ENCODE measurements at regions of chr12 and their contacts with region 1.

Region 1: GRCh38 chr12:21607701-21608100 is 3.1 kb upstream of the GYS2 start:
- DNase-seq: no peak
- ATAC-seq: peak in 2 of 4 donors; percentile 51 to 52
- H3K4me3 ChIP-seq: no peak overlapping the region
- H3K27ac ChIP-seq: no peak overlapping the region
- H3K4me1 ChIP-seq: peaks cover 0 to 6% (median 0%) of the 10 kb centered on the region in 12 donors
- H3K27me3 ChIP-seq: no peaks in the 10 kb centered on the region
- CTCF ChIP-seq: peak; percentile 21 to 65 (median 55)
- POLR2A ChIP-seq: no peak

Region 2: DNA sequence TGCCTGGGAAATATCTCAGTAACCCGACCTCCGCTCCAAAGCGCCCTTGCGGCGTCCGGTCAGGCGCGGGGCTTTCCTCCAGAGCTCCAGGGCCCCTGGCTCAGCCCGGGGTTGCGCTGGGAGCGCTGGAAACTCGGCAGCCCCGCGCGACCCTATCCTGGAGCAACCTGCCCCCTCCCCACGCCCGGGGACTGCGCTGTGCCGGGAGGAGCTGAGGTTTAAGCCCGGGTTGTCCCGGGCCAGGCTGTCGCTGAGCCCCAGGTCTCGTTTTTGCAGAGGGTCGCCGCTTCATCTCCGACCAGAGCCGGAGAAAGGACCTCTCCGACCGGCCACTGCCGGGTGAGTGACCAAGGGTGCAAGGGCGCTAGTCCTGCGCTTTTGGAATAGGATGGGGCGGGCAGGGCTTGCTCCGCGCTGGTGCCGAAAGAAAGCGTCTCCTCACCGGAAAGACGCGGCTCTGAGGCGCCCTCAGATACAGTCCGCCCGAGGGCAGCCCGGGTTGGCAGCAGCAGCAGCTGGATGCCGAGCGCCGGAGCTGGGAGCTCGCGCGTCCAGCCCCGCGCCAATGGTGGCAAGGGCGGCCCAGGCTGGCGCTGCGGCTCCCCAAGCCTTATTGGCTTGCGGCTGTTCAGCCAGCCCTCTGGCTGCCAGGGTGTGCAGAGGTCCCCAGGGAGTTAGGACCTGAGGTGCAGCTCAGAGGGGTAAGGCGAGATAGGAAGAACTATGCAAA is 80.1 kb before region 1 on chr12:
- intact Hi-C with region 1: loop called in 1 of 10 experiments (anchors 5 kb)
- DNase-seq: peak; percentile 51 to 82 (median 78)
- ATAC-seq: peak; percentile 88 to 95 (median 94)
- H3K4me3 ChIP-seq: peak overlapping the region; percentile 30 to 84 (median 70)
- H3K27ac ChIP-seq: peak overlapping the region; percentile 35 to 89 (median 80)
- H3K4me1 ChIP-seq: peaks cover 0 to 23% (median 5%) of the 10 kb centered on the region in 12 donors
- H3K27me3 ChIP-seq: peaks cover 0 to 42% (median 0%) of the 10 kb centered on the region in 9 donors
- CTCF ChIP-seq: peak in 3 of 12 donors; percentile 21 to 33 (median 24)
- POLR2A ChIP-seq: no peak

Region 3: GRCh38 chr12:21666722-21667121 is 59.0 kb after region 1 on chr12:
- intact Hi-C with region 1: no loop called
- DNase-seq: no peak
- ATAC-seq: no peak
- H3K4me3 ChIP-seq: no peak overlapping the region
- H3K27ac ChIP-seq: no peak overlapping the region
- H3K4me1 ChIP-seq: no peaks in the 10 kb centered on the region
- H3K27me3 ChIP-seq: no peaks in the 10 kb centered on the region
- CTCF ChIP-seq: no peak
- POLR2A ChIP-seq: no peak

Region 4: GRCh38 chr12:21677622-21678277 is 70.0 kb after region 1 on chr12:
- intact Hi-C with region 1: loop called (anchors 1 to 5 kb)
- DNase-seq: no peak
- ATAC-seq: no peak
- H3K4me3 ChIP-seq: no peak overlapping the region
- H3K27ac ChIP-seq: no peak overlapping the region
- H3K4me1 ChIP-seq: peaks cover 0 to 11% (median 0%) of the 10 kb centered on the region in 12 donors
- H3K27me3 ChIP-seq: no peaks in the 10 kb centered on the region
- CTCF ChIP-seq: no peak
- POLR2A ChIP-seq: no peak

Region 5: DNA sequence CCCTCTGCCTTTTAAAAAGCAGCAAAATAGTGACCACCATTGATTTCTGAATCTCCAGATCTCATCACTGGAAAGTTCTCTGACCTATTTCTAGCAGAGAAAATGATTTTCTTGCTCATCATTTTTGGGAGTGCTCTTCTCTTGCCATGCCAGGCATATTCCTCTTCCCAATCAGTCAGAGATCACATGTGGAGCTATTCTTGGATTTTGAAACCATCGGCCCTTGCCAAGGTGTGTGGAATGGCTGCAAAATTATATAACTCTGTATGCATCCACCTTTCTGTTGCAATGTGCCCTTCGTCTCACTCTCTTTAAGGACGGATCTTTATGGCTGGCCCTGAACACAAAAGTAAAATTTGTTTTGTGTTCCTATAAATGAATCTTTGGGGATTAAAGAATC is 75.4 kb after region 1 on chr12:
- intact Hi-C with region 1: loop called (anchors 1 to 5 kb)
- DNase-seq: no peak
- ATAC-seq: peak in 3 of 4 donors; percentile 50 to 81 (median 65)
- H3K4me3 ChIP-seq: no peak overlapping the region
- H3K27ac ChIP-seq: peak overlapping the region in 6 of 12 donors; percentile 17 to 53 (median 38)
- H3K4me1 ChIP-seq: peaks cover 0 to 16% (median 0%) of the 10 kb centered on the region in 12 donors
- H3K27me3 ChIP-seq: peaks cover 0 to 2% (median 0%) of the 10 kb centered on the region in 9 donors
- CTCF ChIP-seq: no peak
- POLR2A ChIP-seq: no peak

Region 6: DNA sequence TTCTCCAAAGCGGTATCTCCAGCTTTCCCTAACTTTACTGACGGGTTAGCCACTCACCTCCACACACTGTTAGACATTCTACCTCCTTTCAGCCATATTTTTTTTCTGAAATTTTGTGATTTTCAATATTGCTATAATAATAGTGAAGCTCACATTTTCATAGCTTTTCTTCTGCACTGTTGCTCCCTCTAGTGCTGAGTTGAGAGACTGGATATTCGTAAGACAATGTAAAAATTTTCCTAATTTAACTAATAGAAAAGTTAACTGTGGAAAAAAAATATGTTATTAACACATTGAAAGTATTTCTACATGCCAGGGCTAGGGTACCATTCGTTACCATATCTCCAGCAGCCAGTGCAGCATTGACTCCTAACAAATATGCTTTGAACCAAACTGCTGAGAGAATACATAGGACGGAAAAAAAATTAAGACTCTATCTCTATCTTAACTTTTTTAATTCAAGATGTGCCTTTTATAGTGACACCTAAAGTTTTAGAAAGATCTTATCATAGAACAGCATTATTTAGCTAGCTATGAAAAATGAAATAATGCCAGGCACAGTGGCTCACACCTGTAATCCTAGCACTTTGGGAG is 382.2 kb after region 1 on chr12:
- intact Hi-C with region 1: loop called in 1 of 10 experiments (anchors 10 kb)
- DNase-seq: no peak
- ATAC-seq: peak in 1 of 4 donors; percentile 36
- H3K4me3 ChIP-seq: no peak overlapping the region
- H3K27ac ChIP-seq: no peak overlapping the region
- H3K4me1 ChIP-seq: peaks cover 0 to 6% (median 0%) of the 10 kb centered on the region in 12 donors
- H3K27me3 ChIP-seq: no peaks in the 10 kb centered on the region
- CTCF ChIP-seq: peak; percentile 28 to 73 (median 58)
- POLR2A ChIP-seq: no peak

Region 7: GRCh38 chr12:22029991-22030390 is 422.3 kb after region 1 on chr12:
- intact Hi-C with region 1: loop called in 1 of 10 experiments (anchors 10 kb)
- DNase-seq: no peak
- ATAC-seq: no peak
- H3K4me3 ChIP-seq: no peak overlapping the region
- H3K27ac ChIP-seq: no peak overlapping the region
- H3K4me1 ChIP-seq: peaks cover 0 to 8% (median 0%) of the 10 kb centered on the region in 12 donors
- H3K27me3 ChIP-seq: no peaks in the 10 kb centered on the region
- CTCF ChIP-seq: no peak
- POLR2A ChIP-seq: no peak

Measured in heart left ventricle (tissue), 16 donors.